ENCODE measurements at regions of chr3 and their contacts with region 1.

Region 1: GRCh38 chr3:72665701-72666443 is 182.4 kb downstream of the SHQ1 start:
- DNase-seq: peak in 4 of 5 donors; percentile 45 to 54 (median 48)
- H3K4me3 ChIP-seq: no peak overlapping the region
- H3K4me3 Mint-ChIP-seq: no peak overlapping the region
- H3K27ac ChIP-seq: no peak overlapping the region
- H3K27ac Mint-ChIP-seq: peak overlapping the region in 1 of 7 donors; percentile 36
- H3K4me1 ChIP-seq: no peaks in the 10 kb centered on the region
- H3K4me1 Mint-ChIP-seq: no peaks in the 10 kb centered on the region
- H3K27me3 ChIP-seq: no peaks in the 10 kb centered on the region
- H3K27me3 Mint-ChIP-seq: no peaks in the 10 kb centered on the region

Region 2: DNA sequence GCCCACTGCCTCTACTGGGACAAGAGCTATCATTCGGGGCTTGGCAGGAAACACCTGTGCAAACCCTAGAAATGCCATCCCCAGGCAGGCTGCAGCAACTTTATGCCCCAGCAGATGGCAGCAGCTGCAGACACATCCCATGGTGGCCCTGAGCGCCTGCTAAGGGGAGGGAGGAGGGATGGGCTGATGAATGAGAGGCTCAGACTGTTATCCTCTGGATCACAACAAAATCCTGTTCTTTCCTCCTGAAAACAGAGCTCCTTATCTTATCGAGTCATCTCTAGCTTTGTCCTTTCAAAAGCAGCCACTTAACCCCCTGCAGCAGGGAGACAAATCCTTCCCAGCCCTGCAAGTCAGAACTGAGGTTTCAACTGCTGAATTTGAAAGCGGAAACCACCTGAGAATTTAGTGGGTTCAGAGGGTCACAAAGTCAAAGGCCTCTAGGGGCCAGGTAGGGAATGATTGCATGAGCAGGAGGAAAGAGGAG is 790.4 kb before region 1 on chr3:
- CTCF ChIA-PET with region 1: interaction called, 32 read pairs
- POLR2A ChIA-PET with region 1: no interaction called
- intact Hi-C with region 1: loop called (anchors 2 kb)
- DNase-seq: peak; percentile 65 to 73 (median 68)
- H3K4me3 ChIP-seq: no peak overlapping the region
- H3K4me3 Mint-ChIP-seq: peak overlapping the region in 1 of 8 donors; percentile 43
- H3K27ac ChIP-seq: no peak overlapping the region
- H3K27ac Mint-ChIP-seq: no peak overlapping the region
- H3K4me1 ChIP-seq: peaks cover 26% of the 10 kb centered on the region
- H3K4me1 Mint-ChIP-seq: peaks cover 18 to 24% (median 20%) of the 10 kb centered on the region in 4 donors
- H3K27me3 ChIP-seq: no peaks in the 10 kb centered on the region
- H3K27me3 Mint-ChIP-seq: peaks cover 3 to 5% of the 10 kb centered on the region in 2 donors

Region 3: GRCh38 chr3:72738752-72739530 is 73.1 kb after region 1 on chr3:
- CTCF ChIA-PET with region 1: interaction called, 20 read pairs
- POLR2A ChIA-PET with region 1: no interaction called
- intact Hi-C with region 1: no loop called
- DNase-seq: peak; percentile 68 to 78 (median 75)
- H3K4me3 ChIP-seq: peak overlapping the region; percentile 63 to 78
- H3K4me3 Mint-ChIP-seq: peak overlapping the region; percentile 87 to 94 (median 90)
- H3K27ac ChIP-seq: peak overlapping the region; percentile 27
- H3K27ac Mint-ChIP-seq: peak overlapping the region; percentile 30 to 93 (median 87)
- H3K4me1 ChIP-seq: peaks cover 19% of the 10 kb centered on the region
- H3K4me1 Mint-ChIP-seq: peaks cover 9 to 29% (median 17%) of the 10 kb centered on the region in 4 donors
- H3K27me3 ChIP-seq: no peaks in the 10 kb centered on the region
- H3K27me3 Mint-ChIP-seq: no peaks in the 10 kb centered on the region

Region 4: DNA sequence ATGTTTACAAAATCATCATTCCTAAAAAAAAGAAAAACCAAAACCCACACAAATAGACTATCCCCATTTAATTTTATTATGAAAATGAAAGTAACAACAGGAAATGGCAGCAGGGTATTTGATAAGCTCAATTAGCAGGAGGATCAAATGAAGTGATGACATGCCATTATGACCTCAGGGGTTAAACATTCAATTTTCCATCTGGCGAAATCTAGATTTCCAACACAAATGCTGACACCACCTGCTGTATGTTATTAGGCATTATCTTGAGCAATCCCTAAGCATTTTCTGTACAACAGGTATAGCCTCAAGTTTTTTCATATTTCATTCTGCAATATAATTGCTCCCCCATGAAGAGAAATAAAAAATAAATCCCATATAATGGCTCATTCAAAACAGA is 125.3 kb after region 1 on chr3:
- CTCF ChIA-PET with region 1: interaction called, 13 read pairs
- POLR2A ChIA-PET with region 1: no interaction called
- intact Hi-C with region 1: no loop called
- DNase-seq: peak in 2 of 5 donors; percentile 0 to 4
- H3K4me3 ChIP-seq: no peak overlapping the region
- H3K4me3 Mint-ChIP-seq: peak overlapping the region; percentile 45 to 79 (median 66)
- H3K27ac ChIP-seq: no peak overlapping the region
- H3K27ac Mint-ChIP-seq: peak overlapping the region in 3 of 7 donors; percentile 54 to 89 (median 85)
- H3K4me1 ChIP-seq: peaks cover 10% of the 10 kb centered on the region
- H3K4me1 Mint-ChIP-seq: peaks cover 12 to 17% (median 12%) of the 10 kb centered on the region in 4 donors
- H3K27me3 ChIP-seq: no peaks in the 10 kb centered on the region
- H3K27me3 Mint-ChIP-seq: no peaks in the 10 kb centered on the region

Region 5: GRCh38 chr3:72818092-72818773 is 152.4 kb after region 1 on chr3:
- CTCF ChIA-PET with region 1: interaction called, 438 read pairs
- POLR2A ChIA-PET with region 1: interaction called, 5 read pairs
- intact Hi-C with region 1: loop called (anchors 1 kb)
- DNase-seq: peak in 1 of 5 donors; percentile 5
- H3K4me3 ChIP-seq: no peak overlapping the region
- H3K4me3 Mint-ChIP-seq: no peak overlapping the region
- H3K27ac ChIP-seq: no peak overlapping the region
- H3K27ac Mint-ChIP-seq: peak overlapping the region in 1 of 7 donors; percentile 59
- H3K4me1 ChIP-seq: peaks cover 14% of the 10 kb centered on the region
- H3K4me1 Mint-ChIP-seq: peaks cover 0 to 4% (median 0%) of the 10 kb centered on the region in 4 donors
- H3K27me3 ChIP-seq: no peaks in the 10 kb centered on the region
- H3K27me3 Mint-ChIP-seq: no peaks in the 10 kb centered on the region

Region 6: GRCh38 chr3:72924055-72924454 is 258.2 kb after region 1 on chr3:
- CTCF ChIA-PET with region 1: no interaction called
- POLR2A ChIA-PET with region 1: no interaction called
- intact Hi-C with region 1: no loop called
- DNase-seq: no peak
- H3K4me3 ChIP-seq: no peak overlapping the region
- H3K4me3 Mint-ChIP-seq: no peak overlapping the region
- H3K27ac ChIP-seq: no peak overlapping the region
- H3K27ac Mint-ChIP-seq: no peak overlapping the region
- H3K4me1 ChIP-seq: no peaks in the 10 kb centered on the region
- H3K4me1 Mint-ChIP-seq: no peaks in the 10 kb centered on the region
- H3K27me3 ChIP-seq: no peaks in the 10 kb centered on the region
- H3K27me3 Mint-ChIP-seq: peaks cover 6 to 10% of the 10 kb centered on the region in 2 donors

Region 7: GRCh38 chr3:72990701-72991395 is 325.0 kb after region 1 on chr3:
- CTCF ChIA-PET with region 1: no interaction called
- POLR2A ChIA-PET with region 1: no interaction called
- intact Hi-C with region 1: no loop called
- DNase-seq: no peak
- H3K4me3 ChIP-seq: no peak overlapping the region
- H3K4me3 Mint-ChIP-seq: no peak overlapping the region
- H3K27ac ChIP-seq: no peak overlapping the region
- H3K27ac Mint-ChIP-seq: no peak overlapping the region
- H3K4me1 ChIP-seq: no peaks in the 10 kb centered on the region
- H3K4me1 Mint-ChIP-seq: peaks cover 0 to 5% (median under 1%) of the 10 kb centered on the region in 4 donors
- H3K27me3 ChIP-seq: no peaks in the 10 kb centered on the region
- H3K27me3 Mint-ChIP-seq: no peaks in the 10 kb centered on the region

Region 8: GRCh38 chr3:73086071-73086494 is 420.2 kb after region 1 on chr3:
- CTCF ChIA-PET with region 1: interaction called, 14 read pairs
- POLR2A ChIA-PET with region 1: no interaction called
- intact Hi-C with region 1: no loop called
- DNase-seq: peak in 4 of 5 donors; percentile 33 to 41 (median 39)
- H3K4me3 ChIP-seq: no peak overlapping the region
- H3K4me3 Mint-ChIP-seq: peak overlapping the region in 6 of 8 donors; percentile 39 to 79 (median 62)
- H3K27ac ChIP-seq: no peak overlapping the region
- H3K27ac Mint-ChIP-seq: peak overlapping the region in 3 of 7 donors; percentile 10 to 68 (median 48)
- H3K4me1 ChIP-seq: peaks cover 6% of the 10 kb centered on the region
- H3K4me1 Mint-ChIP-seq: peaks cover 5 to 8% (median 5%) of the 10 kb centered on the region in 4 donors
- H3K27me3 ChIP-seq: no peaks in the 10 kb centered on the region
- H3K27me3 Mint-ChIP-seq: no peaks in the 10 kb centered on the region